ENCODE measurements at regions of chr4 and their contacts with region 1.

Region 1: GRCh38 chr4:76949276-76950051 is at the start of gene SEPTIN11:
- DNase-seq: peak; percentile 92
- H3K4me3 ChIP-seq: peak within 1 kb of the TSS; percentile 73 to 95 (median 74)
- H3K27ac ChIP-seq: peak within 1 kb of the TSS; percentile 81
- H3K4me1 ChIP-seq: peaks cover 19% of the 10 kb centered on the region
- H3K27me3 ChIP-seq: no peaks in the 10 kb centered on the region
- CTCF ChIP-seq: peak in 1 of 2 donors; percentile 5
- POLR2A ChIP-seq: peak; percentile 96
- total RNA-seq, gene SEPTIN11: 168 and 202 TPM in 2 replicates

Region 2: DNA sequence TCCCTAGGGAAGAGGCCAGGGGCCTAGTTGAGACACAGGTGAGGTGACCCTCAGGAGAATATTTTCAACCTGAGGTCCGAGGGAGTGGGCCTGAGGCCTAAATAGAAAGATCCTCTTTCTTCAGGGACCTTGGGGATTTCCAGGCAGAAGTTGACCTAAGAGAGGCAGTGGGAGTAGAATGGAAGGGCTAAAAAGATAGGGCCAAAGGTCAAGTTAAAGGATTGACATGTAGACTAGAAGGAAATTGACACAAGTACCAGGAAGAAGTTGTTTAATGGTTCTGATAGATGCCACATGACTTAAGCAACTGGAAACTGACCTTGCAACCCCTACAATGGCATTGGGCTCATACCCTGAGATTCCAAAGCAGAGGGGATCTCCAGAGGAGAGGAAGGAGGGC is 437.5 kb before region 1 on chr4:
- CTCF ChIA-PET with region 1: no interaction called
- POLR2A ChIA-PET with region 1: no interaction called
- dilution Hi-C with region 1: no loop called
- intact Hi-C with region 1: loop called (anchors 1 kb)
- DNase-seq: no peak
- H3K4me3 ChIP-seq: no peak overlapping the region
- H3K27ac ChIP-seq: no peak overlapping the region
- H3K4me1 ChIP-seq: no peaks in the 10 kb centered on the region
- H3K27me3 ChIP-seq: no peaks in the 10 kb centered on the region
- CTCF ChIP-seq: no peak
- POLR2A ChIP-seq: no peak

Region 3: GRCh38 chr4:76803522-76803921 is 145.9 kb before region 1 on chr4:
- CTCF ChIA-PET with region 1: no interaction called
- POLR2A ChIA-PET with region 1: no interaction called
- dilution Hi-C with region 1: no loop called
- intact Hi-C with region 1: loop called (anchors 1 kb)
- DNase-seq: peak; percentile 89
- H3K4me3 ChIP-seq: no peak overlapping the region
- H3K27ac ChIP-seq: peak overlapping the region; percentile 66
- H3K4me1 ChIP-seq: peaks cover 19% of the 10 kb centered on the region
- H3K27me3 ChIP-seq: no peaks in the 10 kb centered on the region
- CTCF ChIP-seq: no peak
- POLR2A ChIP-seq: no peak

Region 4: DNA sequence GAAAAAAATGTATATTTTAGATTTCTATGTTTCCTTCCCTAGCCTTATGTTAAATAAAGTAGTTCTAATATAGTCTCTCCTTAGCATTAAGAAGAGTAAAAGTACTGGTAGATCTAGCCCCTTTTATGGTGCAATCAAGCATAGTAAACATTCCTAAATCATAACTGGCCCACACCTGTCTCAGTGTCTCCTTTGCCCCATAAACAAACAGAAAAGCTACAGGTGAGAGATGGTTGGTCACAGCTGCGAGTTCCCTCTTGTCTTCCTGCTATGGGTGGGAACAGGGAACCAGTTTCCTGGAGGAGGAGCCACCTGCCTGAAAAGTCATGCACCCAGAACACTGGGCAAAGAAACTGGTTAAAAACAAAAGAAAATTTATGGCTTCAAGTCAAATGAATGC is 68.1 kb before region 1 on chr4:
- CTCF ChIA-PET with region 1: no interaction called
- POLR2A ChIA-PET with region 1: no interaction called
- dilution Hi-C with region 1: no loop called
- intact Hi-C with region 1: loop called (anchors 2 kb)
- DNase-seq: no peak
- H3K4me3 ChIP-seq: no peak overlapping the region
- H3K27ac ChIP-seq: no peak overlapping the region
- H3K4me1 ChIP-seq: peaks cover 7% of the 10 kb centered on the region
- H3K27me3 ChIP-seq: no peaks in the 10 kb centered on the region
- CTCF ChIP-seq: no peak
- POLR2A ChIP-seq: no peak

Region 5: DNA sequence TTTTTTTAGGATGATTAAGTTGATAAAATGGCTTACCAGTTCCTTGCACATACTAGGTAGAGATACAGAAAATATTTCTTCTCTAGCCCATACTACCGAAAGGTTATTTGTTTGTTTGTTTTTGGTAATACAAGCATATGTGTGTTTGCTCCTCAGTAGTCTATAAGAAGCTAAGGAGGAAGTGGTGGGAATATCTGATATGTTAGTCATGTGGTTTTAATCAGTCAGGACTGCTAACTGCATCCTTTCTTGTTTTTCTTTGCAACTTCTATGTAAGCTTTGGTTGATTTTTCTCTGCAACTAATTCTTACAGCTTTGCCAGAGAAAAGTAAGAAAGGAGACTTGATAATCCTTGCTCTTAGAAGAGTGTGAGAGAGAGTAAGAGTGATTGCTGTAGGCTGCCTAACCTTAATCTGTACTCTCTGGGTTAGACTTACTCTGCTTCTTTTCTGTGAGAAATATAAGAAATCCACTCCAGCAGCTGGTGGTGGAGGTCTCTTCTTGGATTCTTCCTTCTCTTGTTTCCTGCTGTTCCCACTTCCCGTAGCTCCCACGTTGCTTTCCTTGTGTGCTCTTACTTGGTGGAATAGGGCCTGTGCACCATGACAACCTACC is 28.4 kb after region 1 on chr4:
- CTCF ChIA-PET with region 1: interaction called, 14 read pairs
- POLR2A ChIA-PET with region 1: no interaction called
- dilution Hi-C with region 1: no loop called
- intact Hi-C with region 1: loop called (anchors 1 kb)
- DNase-seq: peak; percentile 72
- H3K4me3 ChIP-seq: no peak overlapping the region
- H3K27ac ChIP-seq: peak overlapping the region; percentile 77
- H3K4me1 ChIP-seq: peaks cover 37% of the 10 kb centered on the region
- H3K27me3 ChIP-seq: no peaks in the 10 kb centered on the region
- CTCF ChIP-seq: no peak
- POLR2A ChIP-seq: no peak

Region 6: DNA sequence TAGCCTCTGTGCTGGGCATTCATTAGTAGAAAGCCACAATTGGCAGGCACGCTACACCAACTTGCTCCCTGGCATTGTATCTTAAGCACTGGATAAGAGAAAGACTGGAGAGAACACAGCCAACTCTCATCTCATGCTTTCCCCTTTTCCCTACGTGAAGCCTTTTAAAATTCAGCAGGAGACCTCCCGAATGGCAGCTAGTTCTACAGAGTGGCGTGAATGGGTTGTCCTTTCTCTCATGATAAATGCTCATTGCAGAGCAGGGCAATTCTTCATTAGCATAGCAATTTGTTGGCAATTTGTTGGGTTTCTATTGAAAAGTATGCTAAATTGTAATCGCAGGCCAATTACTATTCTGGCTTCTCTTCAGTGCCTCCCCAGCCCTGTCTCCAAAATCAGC is 48.1 kb after region 1 on chr4:
- CTCF ChIA-PET with region 1: no interaction called
- POLR2A ChIA-PET with region 1: no interaction called
- dilution Hi-C with region 1: no loop called
- intact Hi-C with region 1: no loop called
- DNase-seq: no peak
- H3K4me3 ChIP-seq: no peak overlapping the region
- H3K27ac ChIP-seq: no peak overlapping the region
- H3K4me1 ChIP-seq: peaks cover 15% of the 10 kb centered on the region
- H3K27me3 ChIP-seq: no peaks in the 10 kb centered on the region
- CTCF ChIP-seq: no peak
- POLR2A ChIP-seq: no peak

Region 7: GRCh38 chr4:77007358-77008191 is 58.1 kb after region 1 on chr4:
- CTCF ChIA-PET with region 1: interaction called, 6 read pairs
- POLR2A ChIA-PET with region 1: interaction called, 24 read pairs
- dilution Hi-C with region 1: no loop called
- intact Hi-C with region 1: loop called (anchors 1 kb)
- DNase-seq: peak; percentile 95
- H3K4me3 ChIP-seq: peak overlapping the region in 1 of 3 experiments; percentile 28
- H3K27ac ChIP-seq: peak overlapping the region; percentile 100
- H3K4me1 ChIP-seq: peaks cover 91% of the 10 kb centered on the region
- H3K27me3 ChIP-seq: no peaks in the 10 kb centered on the region
- CTCF ChIP-seq: no peak
- POLR2A ChIP-seq: peak; percentile 54

Region 8: DNA sequence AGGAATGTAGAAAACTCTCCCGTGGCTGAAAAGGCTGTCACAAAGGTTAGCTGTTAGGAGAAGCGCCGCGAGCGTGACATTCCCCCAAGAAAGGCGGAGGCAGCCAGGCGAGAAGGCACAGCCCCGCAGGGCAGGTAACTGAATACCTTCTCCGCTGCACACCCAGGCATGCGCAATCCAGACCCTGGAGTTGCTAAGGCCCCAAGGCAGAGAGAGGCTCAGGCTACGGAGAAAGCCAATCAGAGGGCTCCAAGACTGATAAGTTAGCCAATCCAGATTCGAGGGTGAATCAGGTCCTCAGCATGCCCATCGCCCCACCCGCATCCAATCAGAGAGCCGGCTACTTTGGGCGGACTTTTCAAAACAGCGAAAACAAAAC is 207.1 kb after region 1 on chr4:
- CTCF ChIA-PET with region 1: no interaction called
- POLR2A ChIA-PET with region 1: no interaction called
- dilution Hi-C with region 1: no loop called
- intact Hi-C with region 1: loop called (anchors 2 kb)
- DNase-seq: peak; percentile 99
- H3K4me3 ChIP-seq: peak overlapping the region; percentile 75 to 98 (median 80)
- H3K27ac ChIP-seq: peak overlapping the region; percentile 86
- H3K4me1 ChIP-seq: peaks cover 15% of the 10 kb centered on the region
- H3K27me3 ChIP-seq: peaks cover 19 to 22% of the 10 kb centered on the region in 2 experiments
- CTCF ChIP-seq: no peak
- POLR2A ChIP-seq: peak; percentile 57

Measured in endothelial cell of umbilical vein (primary cell).